Activated CD4-positive, alpha-beta T cell treated with anti-CD3 and anti-CD28 coated beads, Interleukin-2, amount 10 ng/mL, durations not matched to agents 24 days and 14 days (primary cell): ENCODE measurements at regions of chr21 and their contacts with region 1.

Region 1: GRCh38 chr21:43916691-43917514 is 51.9 kb downstream of the AGPAT3 start:
- DNase-seq: peak; percentile 90
- H3K4me3 Mint-ChIP-seq: peak overlapping the region; percentile 87
- H3K27ac Mint-ChIP-seq: peak overlapping the region; percentile 89
- H3K4me1 Mint-ChIP-seq: peaks cover 56% of the 10 kb centered on the region
- H3K27me3 Mint-ChIP-seq: peaks cover 2% of the 10 kb centered on the region

Region 2: DNA sequence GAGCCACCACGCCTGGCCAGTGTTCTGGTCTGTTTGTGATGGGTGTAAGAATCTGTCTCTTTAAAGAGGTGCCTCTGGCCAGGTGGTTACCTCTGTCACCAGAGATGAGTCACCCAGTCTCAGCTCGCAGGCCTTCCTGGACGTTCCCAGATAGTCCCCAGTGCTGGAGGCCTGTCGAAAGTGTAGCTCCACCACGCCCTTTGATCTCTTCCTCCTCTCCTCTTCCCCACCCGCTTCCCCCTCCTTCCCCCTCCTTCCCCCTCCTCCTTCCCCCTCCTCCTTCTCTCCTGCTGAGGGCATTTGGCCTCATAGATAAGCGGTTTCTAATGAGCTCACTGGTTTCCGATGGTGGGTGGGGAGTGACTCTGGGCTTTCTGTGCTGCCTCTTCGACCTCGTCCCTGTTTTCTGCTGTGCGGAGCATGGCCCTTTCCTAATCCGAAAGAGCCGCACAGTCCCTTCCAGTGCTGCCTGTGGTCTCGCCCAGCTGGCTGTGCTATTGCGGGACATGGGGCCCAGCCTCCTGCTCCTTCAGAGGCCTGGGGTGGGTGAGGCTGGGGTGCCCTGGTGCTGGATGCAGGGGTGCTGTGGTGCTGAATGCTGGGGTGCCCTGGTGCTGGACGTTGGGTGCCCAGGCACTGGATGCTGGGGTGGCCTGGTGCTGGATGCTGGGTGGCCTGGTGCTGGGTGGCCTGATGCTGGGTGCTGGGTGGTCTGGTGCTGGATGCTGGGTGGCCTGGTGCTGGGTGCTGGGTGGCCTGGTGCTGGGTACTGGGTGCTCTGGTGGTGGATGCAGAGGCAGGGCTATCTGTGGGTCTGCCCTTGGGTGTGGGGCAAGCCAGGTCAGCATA is 32.7 kb before region 1 on chr21:
- intact Hi-C with region 1: loop called (anchors 5 kb)
- DNase-seq: peak; percentile 65
- H3K4me3 Mint-ChIP-seq: peak overlapping the region; percentile 61
- H3K27ac Mint-ChIP-seq: peak overlapping the region; percentile 82
- H3K4me1 Mint-ChIP-seq: peaks cover 55% of the 10 kb centered on the region
- H3K27me3 Mint-ChIP-seq: no peaks in the 10 kb centered on the region

Region 3: GRCh38 chr21:43893536-43894205 is 23.2 kb before region 1 on chr21:
- intact Hi-C with region 1: loop called (anchors 1 kb)
- DNase-seq: peak; percentile 72
- H3K4me3 Mint-ChIP-seq: peak overlapping the region; percentile 56
- H3K27ac Mint-ChIP-seq: peak overlapping the region; percentile 80
- H3K4me1 Mint-ChIP-seq: peaks cover 31% of the 10 kb centered on the region
- H3K27me3 Mint-ChIP-seq: no peaks in the 10 kb centered on the region

Region 4: GRCh38 chr21:44039828-44040227 is 122.9 kb after region 1 on chr21:
- intact Hi-C with region 1: no loop called
- DNase-seq: no peak
- H3K4me3 Mint-ChIP-seq: no peak overlapping the region
- H3K27ac Mint-ChIP-seq: no peak overlapping the region
- H3K4me1 Mint-ChIP-seq: peaks cover 19% of the 10 kb centered on the region
- H3K27me3 Mint-ChIP-seq: no peaks in the 10 kb centered on the region